Activated CD4-positive, alpha-beta T cell treated with anti-CD3 and anti-CD28 coated beads for 36 hours (primary cell): ENCODE measurements at regions of chrX and their contacts with region 1.

Region 1: DNA sequence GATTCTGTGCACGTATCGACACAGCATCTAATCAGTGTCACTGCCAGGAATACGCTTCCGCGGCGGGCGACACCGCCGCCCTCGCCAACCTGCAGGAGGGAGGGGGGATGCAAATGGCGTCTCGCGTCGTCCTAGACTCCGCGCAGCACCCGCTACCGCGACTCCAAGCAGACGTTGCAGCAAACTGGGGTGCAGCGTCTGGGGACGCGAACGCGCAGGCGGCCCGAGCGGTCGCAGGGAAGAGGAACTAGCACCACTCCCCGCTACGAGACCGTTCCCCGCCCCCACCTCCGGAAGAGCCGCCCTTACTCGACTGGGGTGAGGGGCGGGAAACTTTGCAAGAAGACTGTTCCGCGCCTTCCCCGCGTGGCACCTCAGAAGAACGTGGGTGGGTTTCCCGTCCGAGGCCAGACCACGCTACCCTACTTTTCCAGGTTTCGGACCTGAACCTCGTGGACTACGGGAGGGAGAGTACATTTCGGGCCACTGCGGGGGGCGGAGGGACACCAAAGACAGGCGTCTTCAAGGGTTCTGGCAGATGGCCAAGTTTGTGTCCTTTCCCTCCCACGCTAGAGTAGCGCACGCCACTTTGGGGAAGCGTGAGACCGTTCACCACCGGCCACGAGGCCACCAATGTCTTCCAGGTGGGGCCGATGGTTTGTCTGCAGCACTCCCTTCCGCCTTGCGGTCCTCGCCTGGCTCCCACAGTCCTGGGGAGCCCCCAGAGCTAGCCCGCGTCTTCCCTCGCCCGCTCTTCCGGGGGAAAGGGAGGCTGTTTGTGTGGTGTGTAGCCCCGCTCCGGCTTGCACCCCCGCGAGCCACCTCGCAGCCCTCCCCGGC is 78.0 kb upstream of the BCOR start:
- DNase-seq: peak; percentile 84
- ATAC-seq: peak; percentile 37
- H3K4me3 Mint-ChIP-seq: peak overlapping the region; percentile 80
- H3K27ac Mint-ChIP-seq: peak overlapping the region; percentile 99
- H3K4me1 Mint-ChIP-seq: peaks cover 25% of the 10 kb centered on the region
- H3K27me3 Mint-ChIP-seq: no peaks in the 10 kb centered on the region

Region 2: DNA sequence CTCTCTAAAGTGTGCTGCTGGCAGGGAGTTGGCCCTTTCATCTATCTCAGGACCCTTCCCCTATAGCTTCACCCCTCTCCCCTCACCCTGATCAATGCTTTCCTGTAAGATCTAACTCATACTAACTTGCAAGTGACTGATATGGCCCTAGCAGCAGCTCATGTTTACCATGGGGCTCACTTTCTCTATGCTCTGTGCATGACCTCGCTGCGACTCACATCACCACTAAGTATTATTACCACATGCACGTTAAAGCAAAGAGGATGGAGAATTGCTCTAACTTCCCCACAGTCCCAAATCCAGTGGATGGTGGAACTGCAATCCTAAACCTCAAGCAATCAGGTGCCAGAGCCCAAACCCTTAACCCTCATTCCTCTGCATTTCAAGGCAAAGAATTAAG is 747.8 kb before region 1 on chrX:
- CTCF ChIA-PET with region 1: no interaction called
- POLR2A ChIA-PET with region 1: no interaction called
- intact Hi-C with region 1: loop called in 1 of 2 experiments (anchors 5 kb)
- DNase-seq: peak; percentile 73
- ATAC-seq: peak; percentile 71
- H3K4me3 Mint-ChIP-seq: no peak overlapping the region
- H3K27ac Mint-ChIP-seq: peak overlapping the region; percentile 82
- H3K4me1 Mint-ChIP-seq: peaks cover 73% of the 10 kb centered on the region
- H3K27me3 Mint-ChIP-seq: no peaks in the 10 kb centered on the region

Region 3: GRCh38 chrX:39814391-39814790 is 361.3 kb before region 1 on chrX:
- CTCF ChIA-PET with region 1: no interaction called
- POLR2A ChIA-PET with region 1: no interaction called
- intact Hi-C with region 1: loop called (anchors 1 to 5 kb)
- DNase-seq: peak; percentile 58
- ATAC-seq: no peak
- H3K4me3 Mint-ChIP-seq: no peak overlapping the region
- H3K27ac Mint-ChIP-seq: no peak overlapping the region
- H3K4me1 Mint-ChIP-seq: peaks cover 29% of the 10 kb centered on the region
- H3K27me3 Mint-ChIP-seq: no peaks in the 10 kb centered on the region

Region 4: GRCh38 chrX:39827951-39828350 is 347.8 kb before region 1 on chrX:
- CTCF ChIA-PET with region 1: no interaction called
- POLR2A ChIA-PET with region 1: no interaction called
- intact Hi-C with region 1: no loop called
- DNase-seq: no peak
- ATAC-seq: no peak
- H3K4me3 Mint-ChIP-seq: no peak overlapping the region
- H3K27ac Mint-ChIP-seq: no peak overlapping the region
- H3K4me1 Mint-ChIP-seq: no peaks in the 10 kb centered on the region
- H3K27me3 Mint-ChIP-seq: peaks cover 4% of the 10 kb centered on the region

Region 5: DNA sequence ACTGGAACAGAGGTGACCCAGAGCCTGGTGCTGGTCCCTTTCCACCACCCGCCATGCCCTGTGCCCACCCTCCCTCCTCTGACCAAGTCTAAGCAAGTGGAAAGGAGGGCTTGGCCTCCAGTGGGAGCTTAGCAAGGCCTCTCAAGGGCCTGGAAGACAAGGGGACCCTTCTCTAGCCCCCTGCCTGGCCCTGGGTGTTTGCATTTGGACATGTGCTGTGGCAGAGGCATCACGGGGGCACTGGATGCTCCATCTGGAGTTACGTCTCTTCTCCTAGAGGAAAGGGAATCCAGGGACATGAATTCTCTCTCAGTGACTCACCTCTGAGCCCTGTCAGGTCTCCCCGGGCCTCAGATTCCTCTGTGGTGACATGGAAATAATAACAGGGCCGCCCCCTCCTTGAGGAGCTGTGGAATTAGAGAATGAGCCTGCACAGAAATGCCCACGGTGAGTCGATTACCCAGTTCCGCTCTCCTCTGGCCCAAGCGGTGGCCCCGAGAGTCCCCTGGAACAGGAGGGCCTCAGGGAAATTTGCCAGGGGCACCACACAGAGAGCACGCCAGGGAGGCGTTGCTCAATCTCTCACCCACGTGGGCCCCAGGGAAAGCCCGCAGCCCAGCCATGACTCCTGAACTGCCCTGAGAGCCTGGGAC is 267.6 kb before region 1 on chrX:
- CTCF ChIA-PET with region 1: no interaction called
- POLR2A ChIA-PET with region 1: no interaction called
- intact Hi-C with region 1: no loop called
- DNase-seq: peak; percentile 28
- ATAC-seq: no peak
- H3K4me3 Mint-ChIP-seq: no peak overlapping the region
- H3K27ac Mint-ChIP-seq: no peak overlapping the region
- H3K4me1 Mint-ChIP-seq: peaks cover 29% of the 10 kb centered on the region
- H3K27me3 Mint-ChIP-seq: no peaks in the 10 kb centered on the region

Region 6: GRCh38 chrX:40108959-40109287 is 66.8 kb before region 1 on chrX:
- CTCF ChIA-PET with region 1: interaction called, 3 read pairs
- POLR2A ChIA-PET with region 1: interaction called, 5 read pairs
- intact Hi-C with region 1: loop called in 1 of 2 experiments (anchors 2 kb)
- DNase-seq: peak; percentile 83
- ATAC-seq: peak; percentile 60
- H3K4me3 Mint-ChIP-seq: peak overlapping the region; percentile 46
- H3K27ac Mint-ChIP-seq: no peak overlapping the region
- H3K4me1 Mint-ChIP-seq: peaks cover 9% of the 10 kb centered on the region
- H3K27me3 Mint-ChIP-seq: peaks cover 4% of the 10 kb centered on the region

Region 7: GRCh38 chrX:40266490-40267333 is 91.0 kb after region 1 on chrX:
- CTCF ChIA-PET with region 1: interaction called, 3 read pairs
- POLR2A ChIA-PET with region 1: interaction called, 3 read pairs
- intact Hi-C with region 1: loop called (anchors 2 to 5 kb)
- DNase-seq: peak; percentile 74
- ATAC-seq: peak; percentile 88
- H3K4me3 Mint-ChIP-seq: peak overlapping the region; percentile 60
- H3K27ac Mint-ChIP-seq: peak overlapping the region; percentile 63
- H3K4me1 Mint-ChIP-seq: peaks cover 13% of the 10 kb centered on the region
- H3K27me3 Mint-ChIP-seq: no peaks in the 10 kb centered on the region

Region 8: DNA sequence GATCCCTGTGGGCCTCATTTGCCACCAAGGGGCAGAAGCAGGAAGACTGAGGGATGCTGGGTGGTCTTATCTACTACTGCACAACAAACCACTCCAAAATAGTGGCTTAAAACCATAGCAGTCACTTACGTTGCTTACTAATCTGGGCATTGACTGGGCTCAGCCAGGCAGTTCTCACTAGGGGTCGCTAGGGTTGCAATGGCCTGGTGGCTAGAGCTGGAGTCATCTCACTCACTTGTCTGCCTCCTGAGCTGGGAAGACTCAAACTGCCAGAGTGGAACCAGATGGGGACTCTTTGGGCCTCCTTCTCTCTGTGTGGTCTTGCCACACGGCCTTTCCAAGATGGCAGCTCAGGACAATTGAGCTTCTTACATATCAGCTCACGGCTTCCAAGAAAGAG is 138.3 kb after region 1 on chrX:
- CTCF ChIA-PET with region 1: no interaction called
- POLR2A ChIA-PET with region 1: no interaction called
- intact Hi-C with region 1: no loop called
- DNase-seq: no peak
- ATAC-seq: no peak
- H3K4me3 Mint-ChIP-seq: no peak overlapping the region
- H3K27ac Mint-ChIP-seq: no peak overlapping the region
- H3K4me1 Mint-ChIP-seq: no peaks in the 10 kb centered on the region
- H3K27me3 Mint-ChIP-seq: no peaks in the 10 kb centered on the region